AG04449 (cell line): ENCODE measurements at regions of chr7 and their contacts with region 1.

Region 1: DNA sequence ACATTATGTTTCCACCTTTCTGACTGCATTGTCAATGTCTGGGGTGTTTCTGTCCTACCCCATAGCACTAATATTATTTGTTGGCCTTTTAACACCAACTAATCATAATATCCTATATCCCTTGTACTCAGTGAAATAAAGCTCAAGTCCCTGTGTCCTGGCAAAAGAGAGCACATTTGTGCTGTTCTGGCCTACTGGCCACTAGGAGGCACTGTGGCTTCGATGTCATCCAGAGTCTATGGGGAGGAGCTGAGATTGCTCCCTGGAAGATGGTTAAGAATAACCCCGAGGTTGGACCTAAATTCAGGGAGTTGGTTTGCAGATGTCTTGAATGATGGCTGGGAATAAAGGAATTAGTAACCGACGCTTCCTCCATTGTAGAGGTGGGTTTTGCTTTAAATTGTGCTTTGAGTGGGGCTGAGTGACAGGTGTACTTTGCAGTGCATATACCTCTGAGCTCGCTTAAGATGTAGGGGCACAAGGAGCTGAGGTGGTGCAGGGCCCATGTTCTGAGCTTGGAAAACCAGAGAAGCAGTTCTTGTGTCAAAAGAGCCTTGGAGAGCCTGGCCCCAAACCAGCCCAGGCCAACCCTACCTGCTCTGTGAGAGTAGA is 191.2 kb upstream of the PRSS1 start:
- DNase-seq: no peak
- H3K4me3 ChIP-seq: no peak overlapping the region
- CTCF ChIP-seq: peak; percentile 65

Region 2: GRCh38 chr7:142300689-142301088 is 257.4 kb before region 1 on chr7:
- CTCF ChIA-PET with region 1: no interaction called
- POLR2A ChIA-PET with region 1: no interaction called
- DNase-seq: no peak
- H3K4me3 ChIP-seq: no peak overlapping the region
- CTCF ChIP-seq: no peak

Region 3: DNA sequence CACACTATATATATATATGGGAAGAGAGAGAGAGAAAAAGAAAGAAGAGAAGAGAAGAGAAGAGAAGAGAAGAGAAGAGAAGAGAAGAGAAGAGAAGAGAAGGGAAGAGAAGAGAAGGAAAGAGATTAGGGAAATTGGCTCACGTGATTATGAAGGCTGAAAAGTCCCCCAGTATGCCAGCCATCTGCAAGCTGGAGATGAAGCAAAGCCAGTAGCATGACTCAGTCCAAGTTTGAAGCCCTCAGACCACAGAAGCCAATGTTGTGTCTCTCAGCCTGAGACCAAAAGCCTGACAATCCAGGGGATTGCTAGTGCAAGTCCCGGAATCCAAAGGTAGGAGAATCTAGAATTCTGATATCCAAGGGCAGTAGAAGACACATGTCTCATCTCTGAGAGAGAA is 15.1 kb before region 1 on chr7:
- CTCF ChIA-PET with region 1: interaction called, 55 read pairs
- POLR2A ChIA-PET with region 1: interaction called, 5 read pairs
- DNase-seq: no peak
- H3K4me3 ChIP-seq: no peak overlapping the region
- CTCF ChIP-seq: no peak

Region 4: GRCh38 chr7:142568435-142569097 is 10.5 kb after region 1 on chr7:
- CTCF ChIA-PET with region 1: interaction called, 29 read pairs
- POLR2A ChIA-PET with region 1: interaction called, 3 read pairs
- DNase-seq: no peak
- H3K4me3 ChIP-seq: no peak overlapping the region
- CTCF ChIP-seq: no peak